Activated T-helper 2 cell treated with anti-CD3 and anti-CD28 coated beads, Interferon-gamma antibody, Interleukin-2, Interleukin-4, amounts not matched to agents 10 μg/mL and 5 μg/mL and 100 μg/mL, durations not matched to agents 14 hours and 24 hours and 36 hours (primary cell): ENCODE measurements at regions of chr13 and their contacts with region 1.

Region 1: GRCh38 chr13:95191821-95192563 is 109.3 kb downstream of the ABCC4 start:
- DNase-seq: peak; percentile 34
- H3K4me3 Mint-ChIP-seq: no peak overlapping the region
- H3K27ac Mint-ChIP-seq: no peak overlapping the region
- H3K4me1 Mint-ChIP-seq: peaks cover 7% of the 10 kb centered on the region
- H3K27me3 Mint-ChIP-seq: no peaks in the 10 kb centered on the region

Region 2: DNA sequence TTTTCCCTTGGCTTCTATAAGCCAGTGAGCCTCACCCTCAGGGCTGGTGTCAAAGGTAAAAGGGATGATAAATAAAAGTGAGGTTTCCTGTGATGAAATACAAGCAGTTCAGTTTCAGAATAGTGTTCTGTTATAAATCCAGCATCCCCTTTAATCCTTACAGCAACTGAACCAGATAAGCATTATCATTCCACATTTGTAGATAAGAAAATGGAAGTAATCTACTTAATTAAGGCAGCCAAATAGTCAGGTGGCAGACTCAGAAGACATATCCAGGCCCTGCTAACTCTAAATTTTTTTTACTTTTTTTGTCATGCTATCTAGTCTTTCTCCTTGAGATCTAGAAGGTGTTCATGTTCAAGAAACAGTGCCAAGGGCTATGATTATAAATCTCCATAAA is 380.2 kb before region 1 on chr13:
- intact Hi-C with region 1: no loop called
- DNase-seq: no peak
- H3K4me3 Mint-ChIP-seq: no peak overlapping the region
- H3K27ac Mint-ChIP-seq: no peak overlapping the region
- H3K4me1 Mint-ChIP-seq: no peaks in the 10 kb centered on the region
- H3K27me3 Mint-ChIP-seq: no peaks in the 10 kb centered on the region

Region 3: DNA sequence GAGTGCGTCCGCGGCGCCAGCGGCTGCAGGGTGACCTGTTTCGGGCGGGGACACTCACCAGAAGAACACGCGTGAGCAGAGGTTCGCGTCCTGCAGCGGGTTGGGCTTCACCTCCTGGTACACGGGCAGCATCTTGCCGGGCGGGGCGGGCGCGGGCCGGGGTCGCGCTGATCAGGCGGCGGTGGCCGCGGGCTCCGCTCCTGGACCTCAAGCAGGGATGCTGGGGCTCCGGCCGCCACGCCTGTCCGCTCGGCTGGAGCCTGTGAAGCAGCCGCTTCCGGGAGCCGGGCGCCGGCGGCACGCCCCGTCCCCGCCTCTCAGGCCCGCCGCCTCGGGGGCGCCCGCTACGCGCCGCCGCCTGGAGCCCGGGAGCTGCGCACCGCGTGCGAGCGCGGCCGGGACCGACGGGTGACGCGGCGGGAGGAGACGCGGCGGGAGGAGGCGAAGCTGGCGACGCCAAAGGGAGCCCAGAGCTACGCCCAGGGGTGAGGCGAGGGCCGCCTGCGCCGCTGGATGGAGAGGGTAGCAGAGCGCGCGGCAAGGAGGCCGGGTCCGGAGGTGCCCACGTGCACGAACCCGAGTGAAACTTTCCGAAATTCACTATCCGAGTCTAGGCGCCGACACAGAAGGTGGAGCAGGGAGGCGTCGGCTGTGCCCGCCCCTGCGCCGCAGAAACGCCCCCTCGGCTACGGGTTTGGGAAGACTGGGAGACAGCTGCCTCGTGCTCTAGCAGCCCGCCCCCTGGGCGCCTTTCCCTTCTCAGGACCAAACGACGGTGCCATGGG is 109.4 kb after region 1 on chr13 and contains the start of gene ABCC4:
- intact Hi-C with region 1: loop called (anchors 2 kb)
- DNase-seq: peak; percentile 55
- H3K4me3 Mint-ChIP-seq: peak within 1 kb of the TSS; percentile 88
- H3K27ac Mint-ChIP-seq: peak within 1 kb of the TSS; percentile 76
- H3K4me1 Mint-ChIP-seq: peaks cover 27% of the 10 kb centered on the region
- H3K27me3 Mint-ChIP-seq: peaks cover 6% of the 10 kb centered on the region
- total RNA-seq, gene ABCC4: 19.3 and 19.6 TPM in 2 replicates

Region 4: DNA sequence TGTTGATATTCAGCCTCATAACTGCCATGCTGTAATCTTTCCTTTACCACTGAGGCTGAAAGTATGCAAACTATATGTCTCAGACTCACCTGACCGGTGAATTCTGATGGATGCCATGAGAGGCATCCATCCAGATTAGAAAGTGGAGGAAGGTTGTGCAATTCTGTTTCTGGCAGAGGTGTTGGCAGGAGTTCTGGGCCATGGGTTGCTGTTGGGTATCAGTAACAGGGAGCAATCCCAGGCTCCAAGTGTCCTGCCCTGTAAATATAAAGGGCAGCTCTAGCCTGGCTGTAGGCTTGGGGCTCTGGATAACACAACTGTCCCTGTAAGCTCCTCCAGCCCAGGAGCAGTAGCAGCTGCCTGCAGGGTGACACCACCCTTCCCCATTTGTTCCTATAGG is 186.6 kb after region 1 on chr13:
- intact Hi-C with region 1: loop called (anchors 1 kb)
- DNase-seq: no peak
- H3K4me3 Mint-ChIP-seq: no peak overlapping the region
- H3K27ac Mint-ChIP-seq: no peak overlapping the region
- H3K4me1 Mint-ChIP-seq: peaks cover 3% of the 10 kb centered on the region
- H3K27me3 Mint-ChIP-seq: peaks cover 6% of the 10 kb centered on the region